Activated CD4-positive, alpha-beta T cell treated with anti-CD3 and anti-CD28 coated beads, Interleukin-2, amount 10 ng/mL, durations not matched to agents 24 days and 14 days (primary cell): ENCODE measurements at regions of chr4 and their contacts with region 1.

Region 1: GRCh38 chr4:40228497-40229365 is 31.9 kb downstream of the RHOH start:
- DNase-seq: peak; percentile 80
- H3K4me3 Mint-ChIP-seq: peak overlapping the region; percentile 82
- H3K27ac Mint-ChIP-seq: peak overlapping the region; percentile 98
- H3K4me1 Mint-ChIP-seq: peaks cover 76% of the 10 kb centered on the region
- H3K27me3 Mint-ChIP-seq: no peaks in the 10 kb centered on the region

Region 2: DNA sequence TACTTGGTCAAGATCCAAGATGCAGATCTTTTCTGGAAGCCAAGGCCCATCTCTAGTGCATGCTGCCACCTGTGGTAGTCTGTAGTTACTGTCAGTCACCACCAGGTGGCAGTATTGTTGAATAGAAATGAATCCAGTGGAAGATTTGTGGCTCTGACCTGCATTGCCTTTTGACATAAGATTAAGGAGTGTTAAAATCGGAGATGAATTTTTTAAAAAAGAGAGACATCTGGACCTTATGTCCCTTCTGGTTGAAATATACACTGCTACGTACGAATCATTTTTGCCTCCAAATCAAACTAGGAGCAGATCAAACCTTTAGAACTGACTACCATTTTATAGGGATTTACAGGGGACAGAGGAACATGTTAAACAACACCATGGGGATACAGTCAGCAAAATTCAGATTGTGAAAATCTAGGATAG is 78.8 kb before region 1 on chr4:
- intact Hi-C with region 1: loop called (anchors 2 kb)
- DNase-seq: peak; percentile 92
- H3K4me3 Mint-ChIP-seq: no peak overlapping the region
- H3K27ac Mint-ChIP-seq: peak overlapping the region; percentile 22
- H3K4me1 Mint-ChIP-seq: peaks cover 6% of the 10 kb centered on the region
- H3K27me3 Mint-ChIP-seq: no peaks in the 10 kb centered on the region

Region 3: DNA sequence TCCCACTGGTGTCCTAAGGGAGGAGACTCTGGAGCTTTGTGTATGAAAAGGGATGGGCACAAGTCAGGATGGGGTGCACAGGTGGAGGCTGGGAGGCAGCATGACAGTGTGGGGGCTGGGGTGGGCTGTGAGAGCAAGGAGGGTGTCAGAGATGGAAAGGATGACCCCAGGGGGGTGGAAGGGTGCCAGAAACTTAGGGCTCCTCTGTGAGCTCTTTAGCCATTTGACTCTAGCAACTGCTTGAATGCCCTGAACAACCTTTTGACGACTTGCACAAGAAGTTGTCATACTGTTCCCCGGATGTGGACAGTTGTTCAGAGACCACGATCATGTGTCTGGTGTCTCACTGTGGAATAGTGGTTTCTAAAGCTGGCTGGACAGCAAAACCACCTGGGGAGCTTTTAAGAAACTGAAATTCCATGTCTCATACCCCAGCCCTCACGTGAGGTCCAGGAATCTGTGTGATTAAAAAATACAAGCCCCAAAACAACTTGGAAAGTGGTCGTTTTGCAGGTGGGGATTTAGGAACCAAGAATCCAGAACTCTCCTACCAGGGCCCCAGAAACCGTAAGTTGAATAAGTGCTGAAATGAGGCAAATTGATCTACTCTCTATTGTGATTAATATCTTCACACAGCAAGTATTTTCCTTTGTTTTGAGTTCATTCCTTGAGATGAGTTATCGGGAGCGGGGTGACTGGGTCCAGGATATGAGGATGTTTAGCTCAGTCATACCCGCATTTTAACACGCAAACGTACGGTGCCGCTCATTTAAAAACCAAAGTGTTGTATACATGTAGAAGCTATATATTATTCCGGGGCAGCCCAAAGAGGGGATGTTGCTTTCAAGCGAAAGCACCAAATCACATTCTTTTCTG is 28.5 kb before region 1 on chr4:
- intact Hi-C with region 1: loop called (anchors 1 kb)
- DNase-seq: peak; percentile 93
- H3K4me3 Mint-ChIP-seq: peak overlapping the region; percentile 93
- H3K27ac Mint-ChIP-seq: peak overlapping the region; percentile 94
- H3K4me1 Mint-ChIP-seq: peaks cover 44% of the 10 kb centered on the region
- H3K27me3 Mint-ChIP-seq: no peaks in the 10 kb centered on the region

Region 4: DNA sequence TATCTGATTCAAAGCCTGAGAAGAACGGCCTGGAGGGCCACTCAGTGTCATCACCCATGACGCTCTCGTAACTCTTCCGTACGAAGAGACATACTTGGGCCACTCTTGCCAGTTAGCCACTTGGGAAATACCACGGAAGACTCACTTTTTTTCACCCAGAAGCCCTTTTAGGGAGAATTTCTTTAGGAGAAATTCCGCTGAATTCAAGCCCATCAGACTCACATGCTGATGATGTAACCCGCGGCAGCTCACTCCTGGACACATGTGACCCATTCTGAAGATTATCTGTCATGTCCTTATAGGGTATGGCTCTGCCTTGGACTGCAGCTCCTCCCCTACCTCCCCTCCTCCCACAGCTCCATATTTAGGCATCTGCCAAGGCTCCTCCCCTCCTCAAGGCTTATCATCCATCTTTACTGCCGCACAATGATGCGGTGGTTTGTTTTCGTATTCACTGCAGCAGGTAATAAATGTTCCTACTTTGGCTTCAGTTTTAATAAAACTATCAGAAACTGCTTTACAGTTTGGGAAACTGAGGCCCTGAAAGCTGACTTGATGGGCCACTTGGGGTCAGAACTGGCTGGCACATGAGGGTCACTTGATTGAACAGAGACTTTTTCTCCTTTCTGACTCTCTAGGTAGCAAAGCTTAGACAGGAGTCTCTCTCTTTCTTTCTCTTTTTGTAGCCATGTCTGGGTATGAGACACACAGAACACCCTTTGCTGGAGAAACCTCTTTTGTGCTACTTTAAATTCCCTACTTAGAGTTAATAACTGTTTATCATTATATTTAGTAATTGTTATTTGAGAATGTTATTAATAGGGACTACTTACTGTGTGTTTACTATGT is 10.2 kb after region 1 on chr4:
- intact Hi-C with region 1: loop called (anchors 1 kb)
- DNase-seq: peak; percentile 92
- H3K4me3 Mint-ChIP-seq: peak overlapping the region; percentile 75
- H3K27ac Mint-ChIP-seq: peak overlapping the region; percentile 95
- H3K4me1 Mint-ChIP-seq: peaks cover 81% of the 10 kb centered on the region
- H3K27me3 Mint-ChIP-seq: no peaks in the 10 kb centered on the region

Region 5: GRCh38 chr4:40283968-40284367 is 55.2 kb after region 1 on chr4:
- intact Hi-C with region 1: loop called (anchors 1 kb)
- DNase-seq: peak; percentile 91
- H3K4me3 Mint-ChIP-seq: peak overlapping the region; percentile 66
- H3K27ac Mint-ChIP-seq: peak overlapping the region; percentile 95
- H3K4me1 Mint-ChIP-seq: peaks cover 50% of the 10 kb centered on the region
- H3K27me3 Mint-ChIP-seq: no peaks in the 10 kb centered on the region

Region 6: GRCh38 chr4:40309250-40309774 is 80.6 kb after region 1 on chr4:
- intact Hi-C with region 1: loop called (anchors 1 kb)
- DNase-seq: peak; percentile 96
- H3K4me3 Mint-ChIP-seq: peak overlapping the region; percentile 73
- H3K27ac Mint-ChIP-seq: peak overlapping the region; percentile 98
- H3K4me1 Mint-ChIP-seq: peaks cover 81% of the 10 kb centered on the region
- H3K27me3 Mint-ChIP-seq: no peaks in the 10 kb centered on the region

Region 7: GRCh38 chr4:40719008-40719623 is 490.4 kb after region 1 on chr4:
- intact Hi-C with region 1: loop called (anchors 5 kb)
- DNase-seq: peak; percentile 70
- H3K4me3 Mint-ChIP-seq: no peak overlapping the region
- H3K27ac Mint-ChIP-seq: peak overlapping the region; percentile 4
- H3K4me1 Mint-ChIP-seq: peaks cover 35% of the 10 kb centered on the region
- H3K27me3 Mint-ChIP-seq: no peaks in the 10 kb centered on the region